ENCODE measurements at regions of chr16 and their contacts with region 1.

Region 1: DNA sequence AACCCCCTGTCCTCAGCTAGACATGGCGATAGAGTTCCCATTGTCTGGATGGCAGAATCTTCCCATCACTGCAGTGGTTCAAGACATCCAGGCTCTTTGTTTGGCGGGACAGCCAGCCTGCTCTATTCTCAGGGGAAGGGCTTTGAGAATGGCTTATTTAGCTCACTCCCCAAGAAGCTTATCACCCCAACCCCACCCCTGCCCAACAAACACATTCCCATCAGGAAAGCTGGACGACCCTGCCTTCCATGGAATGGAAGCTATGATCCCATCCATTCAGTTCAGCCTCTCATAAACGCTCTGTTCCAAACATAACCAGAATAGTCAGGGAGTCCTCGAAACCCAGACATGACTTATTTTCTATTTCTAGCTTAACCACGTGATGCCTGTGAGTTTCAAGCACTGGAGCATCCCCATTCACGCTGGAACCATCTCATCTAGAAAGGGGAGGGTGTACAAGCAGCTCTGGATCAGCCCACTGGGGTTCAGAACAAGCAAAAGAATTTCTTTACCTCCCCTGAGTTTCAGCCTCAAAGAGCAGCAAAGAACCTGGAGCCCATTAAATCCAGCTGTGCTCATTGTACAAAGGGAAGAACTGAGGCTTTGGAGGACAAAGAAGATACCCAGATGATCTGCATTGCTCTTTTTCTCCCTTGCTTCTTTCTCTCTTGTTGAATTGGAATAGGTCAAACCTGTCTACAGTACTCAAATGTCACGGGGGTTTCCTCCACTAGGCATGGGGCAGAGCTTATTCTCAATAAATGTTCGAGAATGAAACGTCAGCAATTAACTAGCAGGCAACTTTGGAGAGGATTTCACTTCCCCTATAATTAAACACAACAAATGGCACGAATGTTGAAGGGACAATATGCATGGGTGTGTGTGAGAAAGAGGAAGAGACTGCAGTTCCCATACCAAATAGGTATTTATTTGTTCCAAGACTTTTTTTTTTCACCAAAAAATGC is 93.1 kb downstream of the XYLT1 start:
- DNase-seq: peak; percentile 50
- H3K4me3 ChIP-seq: no peak overlapping the region
- H3K27ac ChIP-seq: no peak overlapping the region
- H3K4me1 ChIP-seq: peaks cover 23% of the 10 kb centered on the region
- H3K27me3 ChIP-seq: no peaks in the 10 kb centered on the region

Region 2: GRCh38 chr16:17432901-17433576 is 55.4 kb after region 1 on chr16:
- in situ Hi-C with region 1: loop called (anchors 5 kb)
- DNase-seq: peak; percentile 70
- H3K4me3 ChIP-seq: no peak overlapping the region
- H3K27ac ChIP-seq: 0 out of 2 replicates have a peak overlapping the region, but pooled peaks have one; percentile 14
- H3K4me1 ChIP-seq: peaks cover 19% of the 10 kb centered on the region
- H3K27me3 ChIP-seq: no peaks in the 10 kb centered on the region

Measured in GM23248 (cell line).